Left ventricle myocardium superior (tissue), 1 donor: ENCODE measurements at regions of chr17 and their contacts with region 1.

Region 1: DNA sequence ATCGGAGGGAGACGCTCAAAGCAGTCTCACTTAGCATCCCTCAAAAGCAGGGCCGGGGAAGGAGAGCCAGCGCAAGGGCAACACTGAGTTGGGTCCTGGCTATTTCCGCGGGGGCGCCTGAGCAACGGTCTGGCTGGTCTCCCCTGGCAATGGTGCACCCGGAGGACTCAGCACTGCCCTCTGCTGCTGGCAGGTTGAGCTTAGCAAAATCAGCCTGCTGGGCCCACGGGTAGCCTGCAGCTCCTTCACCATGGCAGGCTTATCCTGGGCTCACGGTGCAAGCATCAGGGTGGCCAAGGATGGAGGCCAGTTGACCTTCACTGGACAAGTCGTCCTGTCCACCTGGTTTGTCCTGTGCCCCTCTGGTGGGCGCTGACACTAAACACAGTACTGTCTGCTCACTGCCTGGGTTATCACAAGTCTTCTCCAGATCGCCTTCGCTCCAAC is 14.4 kb upstream of the ALDH3A1 start:
- DNase-seq: peak; percentile 86
- ATAC-seq: peak; percentile 78

Region 2: DNA sequence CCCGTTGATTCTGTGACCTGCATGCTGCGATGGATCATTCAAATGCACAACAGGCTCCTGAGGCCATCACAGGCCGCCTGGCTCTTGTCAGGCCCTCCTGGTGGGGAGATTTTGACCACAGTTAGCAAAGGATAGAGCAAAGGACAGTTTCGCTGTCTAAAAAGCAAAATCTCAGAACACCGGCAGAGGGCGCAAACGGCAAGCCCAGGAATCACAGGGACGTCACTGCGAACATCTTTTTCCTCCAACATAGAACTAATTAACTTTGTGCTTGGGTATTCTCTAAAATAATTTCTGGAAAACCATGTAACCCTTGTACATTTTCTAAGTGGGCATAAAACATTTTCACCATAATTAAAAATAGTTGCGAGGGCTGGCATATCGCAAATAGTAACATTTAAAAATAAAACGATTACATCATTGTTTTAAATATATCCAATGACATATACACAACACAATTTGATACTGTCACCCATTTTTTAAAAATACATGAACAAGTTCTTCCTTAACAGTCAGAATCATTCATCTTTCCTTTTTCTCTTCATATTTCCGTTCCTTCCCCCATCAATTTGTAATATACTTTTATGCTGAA is 248.5 kb before region 1 on chr17:
- intact Hi-C with region 1: loop called (anchors 5 kb)
- DNase-seq: peak; percentile 68
- ATAC-seq: peak; percentile 81